Adrenal gland (tissue), 19 donors: ENCODE measurements at regions of chrX and their contacts with region 1.

Region 1: GRCh38 chrX:123173833-123174232 is 10.2 kb upstream of the GRIA3 start:
- DNase-seq: no peak
- H3K4me3 ChIP-seq: no peak overlapping the region
- H3K27ac ChIP-seq: no peak overlapping the region
- H3K4me1 ChIP-seq: no peaks in the 10 kb centered on the region
- H3K27me3 ChIP-seq: no peaks in the 10 kb centered on the region
- CTCF ChIP-seq: peak in 4 of 6 experiments; percentile 24 to 35 (median 32)
- POLR2A ChIP-seq: no peak

Region 2: DNA sequence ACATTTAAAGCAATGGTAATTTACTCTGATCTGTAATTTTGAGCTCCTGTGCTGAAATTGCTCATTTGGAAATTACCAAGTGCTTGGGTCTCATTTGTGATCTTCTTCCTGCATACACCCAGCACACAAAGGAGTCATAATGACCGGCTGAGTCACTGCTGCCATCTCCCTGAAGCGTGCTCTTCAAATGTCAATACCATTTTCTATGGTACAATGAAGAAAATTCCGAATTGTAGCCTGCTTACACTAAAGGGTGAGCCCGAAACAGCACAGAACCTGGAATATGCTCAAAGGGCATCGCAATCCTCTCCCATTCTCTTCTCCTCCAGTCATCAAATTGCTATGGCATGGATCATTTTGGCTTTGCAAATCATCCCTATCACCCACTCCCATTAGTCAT is 150.8 kb after region 1 on chrX:
- intact Hi-C with region 1: no loop called
- DNase-seq: no peak
- H3K4me3 ChIP-seq: no peak overlapping the region
- H3K27ac ChIP-seq: no peak overlapping the region
- H3K4me1 ChIP-seq: no peaks in the 10 kb centered on the region
- H3K27me3 ChIP-seq: no peaks in the 10 kb centered on the region
- CTCF ChIP-seq: no peak
- POLR2A ChIP-seq: no peak

Region 3: DNA sequence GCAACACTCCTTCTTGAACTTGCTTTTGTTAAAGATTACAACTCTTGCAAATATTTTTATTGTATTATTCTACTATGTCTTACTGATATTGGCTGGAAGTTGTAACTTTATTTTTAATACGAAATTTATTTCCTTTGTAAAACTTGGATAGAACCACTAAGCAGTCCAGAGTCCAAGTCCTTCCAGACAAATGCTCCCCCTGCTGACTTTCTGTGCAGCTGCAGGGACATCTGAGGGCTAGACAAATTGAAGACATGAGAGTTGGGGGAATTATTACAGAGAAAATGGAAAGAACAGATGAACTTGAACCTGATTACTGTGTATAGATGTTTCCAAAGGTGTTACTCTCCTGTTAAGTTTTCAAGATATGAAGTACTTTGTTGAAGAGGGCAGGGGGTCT is 249.0 kb after region 1 on chrX:
- intact Hi-C with region 1: loop called in 1 of 2 experiments (anchors 10 kb)
- DNase-seq: peak; percentile 18 to 57 (median 36)
- H3K4me3 ChIP-seq: no peak overlapping the region
- H3K27ac ChIP-seq: no peak overlapping the region
- H3K4me1 ChIP-seq: peaks cover 0 to 11% of the 10 kb centered on the region in 2 donors
- H3K27me3 ChIP-seq: no peaks in the 10 kb centered on the region
- CTCF ChIP-seq: peak; percentile 41 to 65 (median 52)
- POLR2A ChIP-seq: no peak